Heart right ventricle (tissue), 16 donors: ENCODE measurements at regions of chr22 and their contacts with region 1.

Region 1: DNA sequence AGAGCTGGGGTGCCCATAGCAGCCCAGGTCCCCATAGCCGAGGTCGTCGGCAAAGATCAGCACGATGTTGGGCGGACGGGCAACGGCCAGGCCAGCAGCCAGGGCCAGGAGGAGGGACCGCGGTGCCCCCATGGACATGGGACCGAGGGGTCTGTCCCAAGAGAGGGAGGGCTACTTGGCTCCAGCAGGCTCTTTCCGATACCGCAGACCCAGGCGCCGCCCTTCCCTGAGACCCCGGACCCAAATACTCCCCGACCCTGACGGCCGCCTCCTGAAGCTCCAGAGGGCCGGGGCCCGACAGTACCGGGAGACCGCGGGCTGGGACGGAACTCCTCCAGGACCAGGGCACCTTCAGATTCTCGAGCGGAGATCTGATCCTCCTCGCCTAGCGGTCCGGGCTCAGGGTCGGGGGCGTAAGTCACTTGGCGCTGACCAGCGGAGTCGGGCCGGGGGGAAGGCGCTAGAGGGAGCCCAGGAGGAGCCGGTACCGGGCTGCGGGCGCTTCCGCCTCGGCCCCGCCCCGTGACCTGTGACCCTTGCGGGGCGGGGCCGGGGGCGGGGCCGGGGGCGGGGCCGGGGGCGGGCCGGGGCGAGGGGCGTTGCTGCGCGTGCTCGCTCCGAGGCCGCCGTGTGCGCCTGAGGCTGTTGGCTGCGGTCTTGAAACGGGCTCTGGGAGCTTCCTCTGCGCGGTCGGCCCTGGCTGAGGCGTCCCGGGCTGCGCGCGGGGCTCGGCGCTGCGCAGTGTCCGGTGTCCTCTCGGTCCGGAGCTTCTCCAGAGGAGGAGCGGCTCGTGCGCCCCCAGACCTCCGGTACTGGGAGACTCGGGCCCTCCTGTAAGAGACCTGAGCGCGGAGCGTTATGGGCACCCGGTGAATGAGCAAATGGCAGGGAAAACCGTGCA is at the start of gene ARSA:
- DNase-seq: peak; percentile 85 to 86
- ATAC-seq: peak; percentile 89 to 95 (median 92)
- H3K4me3 ChIP-seq: peak within 1 kb of the TSS; percentile 41 to 95 (median 82)
- H3K27ac ChIP-seq: peak within 1 kb of the TSS; percentile 69 to 93 (median 86)
- H3K4me1 ChIP-seq: peaks cover 7 to 34% (median 24%) of the 10 kb centered on the region in 9 donors
- H3K27me3 ChIP-seq: no peaks in the 10 kb centered on the region
- CTCF ChIP-seq: peak in 8 of 9 donors; percentile 14 to 72 (median 44)
- total RNA-seq, gene ARSA: 19.6 to 33.3 (median 26.0) TPM

Region 2: DNA sequence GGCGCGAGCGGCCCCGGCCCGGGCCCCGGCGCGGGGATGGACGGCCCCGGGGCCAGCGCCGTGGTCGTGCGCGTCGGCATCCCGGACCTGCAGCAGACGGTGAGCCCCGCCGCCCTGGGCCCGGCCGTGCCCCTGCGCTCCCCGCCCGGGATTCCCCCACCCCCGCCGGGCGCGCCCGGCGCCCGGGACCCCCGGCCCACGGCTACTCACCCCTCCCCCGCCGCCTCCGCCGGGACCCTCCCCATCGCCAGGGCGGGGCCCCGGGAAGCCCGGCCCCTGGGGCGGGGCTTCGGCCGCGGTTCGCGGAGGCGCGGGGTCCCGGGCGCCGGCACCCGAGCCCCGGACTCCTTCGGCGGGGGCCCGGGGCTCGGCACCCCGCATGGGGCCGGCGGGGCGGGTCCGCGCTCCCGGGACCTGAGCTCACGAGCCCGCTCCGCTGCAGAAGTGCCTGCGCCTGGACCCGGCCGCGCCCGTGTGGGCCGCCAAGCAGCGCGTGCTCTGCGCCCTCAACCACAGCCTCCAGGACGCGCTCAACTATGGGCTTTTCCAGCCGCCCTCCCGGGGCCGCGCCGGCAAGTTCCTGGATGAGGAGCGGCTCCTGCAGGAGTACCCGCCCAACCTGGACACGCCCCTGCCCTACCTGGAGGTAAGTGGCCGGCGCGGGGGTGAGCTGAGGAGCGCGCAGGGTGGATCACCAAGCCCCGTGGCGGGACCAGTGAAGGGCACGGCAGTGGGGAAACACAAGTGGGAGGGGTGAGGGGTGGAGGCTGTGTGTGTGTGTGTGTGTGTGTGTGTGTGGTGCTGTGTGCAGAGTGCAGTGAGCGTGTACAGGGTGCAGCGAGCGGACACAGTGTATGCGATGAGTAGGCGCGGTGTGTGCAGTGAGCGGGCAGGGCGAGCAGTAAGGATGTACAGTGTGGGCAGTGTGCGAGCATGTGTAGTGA is 47.0 kb after region 1 on chr22:
- intact Hi-C with region 1: loop called in 6 of 10 experiments (anchors 1 to 5 kb)
- DNase-seq: no peak
- ATAC-seq: no peak
- H3K4me3 ChIP-seq: peak overlapping the region; percentile 37 to 67 (median 57)
- H3K27ac ChIP-seq: peak overlapping the region; percentile 40 to 83 (median 68)
- H3K4me1 ChIP-seq: peaks cover 0 to 69% (median 29%) of the 10 kb centered on the region in 9 donors
- H3K27me3 ChIP-seq: peaks cover 6 to 57% (median 32%) of the 10 kb centered on the region in 7 donors
- CTCF ChIP-seq: no peak

Region 3: GRCh38 chr22:50691521-50691920 is 63.6 kb after region 1 on chr22:
- intact Hi-C with region 1: loop called in 4 of 10 experiments (anchors 5 kb)
- DNase-seq: peak in 1 of 2 donors; percentile 4
- ATAC-seq: no peak
- H3K4me3 ChIP-seq: no peak overlapping the region
- H3K27ac ChIP-seq: peak overlapping the region in 1 of 10 donors; percentile 15
- H3K4me1 ChIP-seq: peaks cover 2 to 88% (median 35%) of the 10 kb centered on the region in 9 donors
- H3K27me3 ChIP-seq: peaks cover 0 to 17% (median 0%) of the 10 kb centered on the region in 7 donors
- CTCF ChIP-seq: peak in 7 of 9 donors; percentile 29 to 57 (median 37)

Region 4: DNA sequence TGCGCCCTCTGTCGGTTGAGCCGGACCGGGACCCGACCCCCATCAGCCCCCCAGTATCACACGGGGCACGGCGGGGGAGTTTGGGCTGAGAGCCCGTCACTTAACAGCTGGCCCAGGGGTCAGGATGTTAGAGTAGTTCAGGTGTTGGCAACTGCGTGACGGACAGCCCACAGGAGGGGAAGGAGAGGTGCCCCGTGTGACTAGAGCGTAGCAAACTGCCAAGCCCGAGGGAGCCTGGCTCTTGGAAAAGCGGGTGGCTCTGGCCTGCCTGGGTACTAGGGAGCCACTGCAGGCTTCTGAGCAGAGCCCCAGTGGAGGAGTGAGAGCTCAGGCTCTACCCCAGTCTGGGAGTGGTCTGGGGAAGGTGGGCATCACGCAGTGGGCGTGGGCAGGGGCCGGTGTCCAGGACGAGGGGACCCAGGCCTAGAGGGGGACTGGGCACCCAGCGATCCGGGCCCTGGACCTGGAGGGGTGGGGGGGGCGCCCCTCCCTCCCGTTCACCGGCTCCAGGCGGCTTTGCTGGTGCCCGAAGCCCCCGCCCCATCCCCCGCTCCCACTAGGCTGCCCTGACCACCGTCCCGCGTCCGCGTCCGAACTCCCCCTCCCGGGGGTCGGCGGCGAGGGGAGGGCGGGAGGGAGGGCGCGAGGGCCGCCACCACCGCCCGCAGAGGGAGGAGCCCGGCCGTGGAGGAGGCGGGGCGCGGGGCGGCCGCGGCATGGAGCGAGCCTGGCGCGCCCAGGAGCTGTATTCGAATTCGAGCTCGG is 69.1 kb after region 1 on chr22:
- intact Hi-C with region 1: loop called in 4 of 10 experiments (anchors 5 kb)
- DNase-seq: peak in 1 of 2 donors; percentile 30
- ATAC-seq: peak; percentile 16 to 65 (median 40)
- H3K4me3 ChIP-seq: peak overlapping the region in 9 of 10 donors; percentile 37 to 54 (median 48)
- H3K27ac ChIP-seq: peak overlapping the region in 3 of 10 donors; percentile 2 to 40 (median 34)
- H3K4me1 ChIP-seq: peaks cover 19 to 95% (median 52%) of the 10 kb centered on the region in 9 donors
- H3K27me3 ChIP-seq: no peaks in the 10 kb centered on the region
- CTCF ChIP-seq: peak in 7 of 9 donors; percentile 42 to 59 (median 50)

Region 5: GRCh38 chr22:50713571-50714056 is 85.7 kb after region 1 on chr22:
- intact Hi-C with region 1: loop called in 1 of 10 experiments (anchors 5 kb)
- DNase-seq: no peak
- ATAC-seq: peak; percentile 19 to 83 (median 56)
- H3K4me3 ChIP-seq: no peak overlapping the region
- H3K27ac ChIP-seq: peak overlapping the region in 5 of 10 donors; percentile 42 to 74 (median 48)
- H3K4me1 ChIP-seq: peaks cover 3 to 61% (median 38%) of the 10 kb centered on the region in 9 donors
- H3K27me3 ChIP-seq: no peaks in the 10 kb centered on the region
- CTCF ChIP-seq: no peak